Activated CD8-positive, alpha-beta T cell treated with anti-CD3 and anti-CD28 coated beads, Interleukin-2, amount 10 ng/mL, durations not matched to agents 7 days and 5 days (primary cell): ENCODE measurements at regions of chr10 and their contacts with region 1.

Region 1: DNA sequence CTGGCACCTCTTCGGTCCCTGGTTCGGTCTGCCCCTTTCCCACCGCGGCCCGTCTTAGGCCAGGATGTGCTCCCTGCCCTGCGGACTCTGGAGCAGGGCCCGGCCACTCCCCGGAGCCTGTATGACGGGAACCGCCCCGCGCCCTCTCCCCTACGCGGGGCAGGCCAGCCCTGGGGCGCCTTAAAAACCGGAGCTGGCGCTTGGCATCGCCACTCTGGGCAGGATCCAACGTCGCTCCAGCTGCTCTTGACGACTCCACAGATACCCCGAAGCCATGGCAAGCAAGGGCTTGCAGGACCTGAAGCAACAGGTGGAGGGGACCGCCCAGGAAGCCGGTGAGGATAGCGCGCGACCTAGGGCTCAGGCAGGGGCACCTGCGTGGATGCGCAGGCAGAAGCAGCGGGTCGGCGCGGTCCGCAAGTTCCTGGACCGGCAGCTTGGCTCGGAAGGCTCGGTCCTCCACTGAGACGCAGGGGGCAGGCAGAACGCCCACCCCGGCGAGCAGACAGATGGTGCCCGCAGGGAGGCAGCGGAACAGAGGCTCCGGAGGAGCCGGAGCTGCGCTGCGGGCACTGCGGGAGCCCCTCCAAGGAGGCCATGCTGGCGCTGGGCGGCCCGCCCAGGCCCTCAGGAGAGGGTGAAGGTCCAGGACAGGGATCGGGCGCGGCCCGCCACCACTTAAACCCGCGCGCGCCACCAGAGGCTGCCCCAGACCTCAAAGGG is at the start of gene ADIRF:
- DNase-seq: no peak
- ATAC-seq: no peak
- H3K4me3 Mint-ChIP-seq: no peak within 1 kb of the TSS
- H3K27ac Mint-ChIP-seq: no peak within 1 kb of the TSS
- H3K4me1 Mint-ChIP-seq: peaks cover 23% of the 10 kb centered on the region
- H3K27me3 Mint-ChIP-seq: peaks cover 28% of the 10 kb centered on the region
- total RNA-seq, gene ADIRF: not detected

Region 2: GRCh38 chr10:86936661-86937501 is 31.6 kb before region 1 on chr10:
- CTCF ChIA-PET with region 1: interaction called, 11 read pairs
- POLR2A ChIA-PET with region 1: interaction called, 3 read pairs
- DNase-seq: no peak
- ATAC-seq: no peak
- H3K4me3 Mint-ChIP-seq: no peak overlapping the region
- H3K27ac Mint-ChIP-seq: no peak overlapping the region
- H3K4me1 Mint-ChIP-seq: peaks cover 9% of the 10 kb centered on the region
- H3K27me3 Mint-ChIP-seq: peaks cover 3% of the 10 kb centered on the region

Region 3: DNA sequence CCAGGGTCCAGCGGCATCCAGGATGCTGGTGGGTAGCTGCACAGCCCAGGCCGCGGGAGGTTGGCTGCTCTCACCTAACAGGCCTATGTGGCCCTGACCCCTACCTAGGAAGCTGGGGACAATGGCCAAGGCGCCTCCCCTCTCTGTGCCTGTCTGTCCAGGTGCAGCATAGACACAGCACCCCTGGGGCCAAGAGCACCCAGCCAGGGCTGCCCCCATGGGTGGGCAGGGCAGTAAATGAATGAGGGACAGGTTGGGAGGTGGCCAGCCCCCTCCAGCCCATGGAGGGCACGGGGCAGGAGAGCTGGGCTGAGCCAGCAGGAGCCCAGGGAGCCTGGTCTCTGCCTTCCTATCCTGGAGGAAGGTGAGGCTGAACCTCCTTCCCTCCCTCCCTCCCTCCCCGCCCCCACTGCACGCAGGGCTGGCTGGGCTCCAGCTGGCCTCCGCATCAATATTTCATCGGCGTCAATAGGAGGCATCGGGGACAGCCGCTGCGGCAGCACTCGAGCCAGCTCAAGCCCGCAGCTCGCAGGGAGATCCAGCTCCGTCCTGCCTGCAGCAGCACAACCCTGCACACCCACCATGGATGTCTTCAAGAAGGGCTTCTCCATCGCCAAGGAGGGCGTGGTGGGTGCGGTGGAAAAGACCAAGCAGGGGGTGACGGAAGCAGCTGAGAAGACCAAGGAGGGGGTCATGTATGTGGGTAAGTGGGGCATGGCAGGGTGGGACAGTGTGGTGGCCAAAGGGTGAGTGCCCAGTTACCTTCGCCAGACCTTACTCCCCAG is 10.1 kb before region 1 on chr10 and contains the start of gene SNCG:
- CTCF ChIA-PET with region 1: interaction called, 13 read pairs
- POLR2A ChIA-PET with region 1: no interaction called
- DNase-seq: no peak
- ATAC-seq: no peak
- H3K4me3 Mint-ChIP-seq: no peak within 1 kb of the TSS
- H3K27ac Mint-ChIP-seq: no peak within 1 kb of the TSS
- H3K4me1 Mint-ChIP-seq: no peaks in the 10 kb centered on the region
- H3K27me3 Mint-ChIP-seq: no peaks in the 10 kb centered on the region
- total RNA-seq, gene SNCG: not detected

Region 4: DNA sequence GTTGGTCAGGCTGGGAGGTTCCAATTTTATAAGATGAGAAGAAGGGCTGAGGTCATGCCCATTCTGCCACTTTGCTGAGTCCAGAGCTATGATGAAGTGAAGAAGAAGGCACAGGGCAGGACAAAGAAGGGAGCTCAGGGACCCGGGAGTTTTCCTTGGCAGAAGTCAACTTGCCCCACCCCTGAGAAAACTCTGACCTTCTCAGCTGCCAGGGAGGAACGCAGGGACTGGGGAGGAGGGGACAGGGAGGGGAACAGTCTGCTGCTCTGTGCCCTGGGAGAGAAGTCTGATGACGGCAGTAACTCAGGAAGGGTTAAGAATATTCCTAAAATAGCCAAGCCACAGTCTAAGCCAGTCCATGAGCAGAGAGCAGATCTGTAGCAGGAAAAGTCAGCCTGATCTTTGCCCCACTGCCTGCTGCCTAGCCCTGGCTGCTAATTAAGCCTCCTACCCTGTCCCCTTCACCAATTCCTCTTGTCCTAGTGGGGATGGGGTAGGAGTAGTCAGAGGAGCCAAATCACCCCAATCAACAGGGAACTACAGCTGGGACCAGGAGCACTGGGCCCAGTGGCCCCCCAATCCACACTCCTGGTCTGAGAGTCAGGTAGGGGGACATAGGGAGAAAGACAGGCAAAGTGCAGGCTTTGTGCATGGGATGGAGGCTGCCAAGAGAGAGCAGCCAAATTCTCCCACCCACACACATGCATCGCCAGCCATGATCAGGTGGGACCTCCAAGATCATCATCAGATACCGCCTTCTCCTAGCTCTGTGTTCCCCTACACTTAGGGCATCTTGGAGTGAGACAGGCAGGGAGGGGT is 11.8 kb after region 1 on chr10:
- CTCF ChIA-PET with region 1: no interaction called
- POLR2A ChIA-PET with region 1: no interaction called
- DNase-seq: no peak
- ATAC-seq: no peak
- H3K4me3 Mint-ChIP-seq: no peak overlapping the region
- H3K27ac Mint-ChIP-seq: no peak overlapping the region
- H3K4me1 Mint-ChIP-seq: no peaks in the 10 kb centered on the region
- H3K27me3 Mint-ChIP-seq: peaks cover 10% of the 10 kb centered on the region